Heart left ventricle (tissue), 16 donors: ENCODE measurements at regions of chr16 and their contacts with region 1.

Region 1: GRCh38 chr16:1492923-1493745 is at the start of gene TELO2:
- DNase-seq: peak; percentile 80 to 93 (median 85)
- ATAC-seq: peak; percentile 69 to 93 (median 90)
- H3K4me3 ChIP-seq: peak within 1 kb of the TSS; percentile 59 to 92 (median 76)
- H3K27ac ChIP-seq: peak within 1 kb of the TSS; percentile 75 to 98 (median 88)
- H3K4me1 ChIP-seq: peaks cover 0 to 31% (median 24%) of the 10 kb centered on the region in 12 donors
- H3K27me3 ChIP-seq: no peaks in the 10 kb centered on the region
- CTCF ChIP-seq: no peak
- POLR2A ChIP-seq: peak in 1 of 2 donors; percentile 20
- total RNA-seq, gene TELO2: 11.8 to 29.6 (median 16.7) TPM

Region 2: DNA sequence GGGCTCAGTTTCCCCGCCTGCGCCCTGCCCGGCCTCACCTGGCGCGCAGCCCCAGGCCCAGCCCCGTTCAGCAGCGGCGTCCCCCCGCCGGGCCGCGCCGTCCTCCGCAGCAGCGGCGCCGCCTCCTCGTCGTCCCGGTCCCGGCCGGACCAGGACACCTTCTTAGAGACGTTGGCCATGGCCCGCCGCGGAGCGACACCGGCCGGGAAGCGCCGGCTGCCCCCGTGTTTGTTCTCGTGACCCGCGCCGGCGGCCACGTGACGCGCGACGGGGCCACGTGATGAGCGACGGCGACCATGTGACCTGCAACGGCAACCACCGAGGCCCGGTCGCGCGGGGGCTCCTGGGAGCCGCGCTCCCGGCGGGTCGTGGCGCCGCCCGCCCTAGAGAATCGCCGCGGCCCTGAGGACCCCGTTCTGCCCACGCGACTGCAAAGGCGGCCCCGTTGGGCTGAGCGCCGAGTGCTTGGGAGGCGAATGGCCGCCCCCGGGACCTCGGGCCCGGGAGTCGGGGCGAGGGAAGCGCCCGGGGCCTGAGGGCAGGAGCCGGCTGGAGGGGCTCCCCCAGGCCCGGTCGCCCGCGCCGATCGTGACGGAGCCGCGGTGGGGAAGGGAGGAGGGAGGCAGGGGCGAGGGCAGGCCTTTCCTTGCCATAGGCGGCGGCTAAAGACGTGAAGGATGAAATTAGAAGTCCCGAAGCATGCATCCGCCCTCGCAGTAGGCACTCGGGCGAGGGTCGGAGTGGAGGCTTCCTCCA is 18.2 kb before region 1 on chr16 and contains the start of gene CLCN7:
- intact Hi-C with region 1: loop called in 1 of 10 experiments (anchors 2 kb)
- DNase-seq: peak; percentile 92 to 96 (median 93)
- ATAC-seq: peak; percentile 85 to 97 (median 96)
- H3K4me3 ChIP-seq: peak within 1 kb of the TSS; percentile 68 to 99 (median 87)
- H3K27ac ChIP-seq: peak within 1 kb of the TSS; percentile 79 to 98 (median 92)
- H3K4me1 ChIP-seq: peaks cover 0 to 51% (median 19%) of the 10 kb centered on the region in 12 donors
- H3K27me3 ChIP-seq: no peaks in the 10 kb centered on the region
- CTCF ChIP-seq: peak in 1 of 12 donors; percentile 20
- POLR2A ChIP-seq: peak in 1 of 2 donors; percentile 93
- total RNA-seq, gene CLCN7: 30.3 to 70.8 (median 33.6) TPM

Region 3: GRCh38 chr16:1533443-1533951 is 40.4 kb after region 1 on chr16 and contains the start of gene TMEM204:
- intact Hi-C with region 1: loop called in 3 of 10 experiments (anchors 5 kb)
- DNase-seq: peak; percentile 87 to 91 (median 90)
- ATAC-seq: peak; percentile 52 to 76 (median 62)
- H3K4me3 ChIP-seq: peak within 1 kb of the TSS; percentile 66 to 93 (median 87)
- H3K27ac ChIP-seq: peak within 1 kb of the TSS; percentile 92 to 99 (median 96)
- H3K4me1 ChIP-seq: peaks cover 8 to 83% (median 66%) of the 10 kb centered on the region in 12 donors
- H3K27me3 ChIP-seq: peaks cover 0 to 17% (median 0%) of the 10 kb centered on the region in 9 donors
- CTCF ChIP-seq: no peak
- POLR2A ChIP-seq: peak in 1 of 2 donors; percentile 93
- total RNA-seq, gene TMEM204: 14.0 to 64.2 (median 19.5) TPM

Region 4: GRCh38 chr16:1564325-1564724 is 71.2 kb after region 1 on chr16:
- intact Hi-C with region 1: loop called in 4 of 10 experiments (anchors 5 to 10 kb)
- DNase-seq: no peak
- ATAC-seq: no peak
- H3K4me3 ChIP-seq: no peak overlapping the region
- H3K27ac ChIP-seq: no peak overlapping the region
- H3K4me1 ChIP-seq: peaks cover 0 to 15% (median 0%) of the 10 kb centered on the region in 12 donors
- H3K27me3 ChIP-seq: no peaks in the 10 kb centered on the region
- CTCF ChIP-seq: peak in 11 of 12 donors; percentile 18 to 58 (median 39)
- POLR2A ChIP-seq: no peak

Region 5: GRCh38 chr16:1677802-1678496 is 184.8 kb after region 1 on chr16 and contains the start of gene JPT2:
- intact Hi-C with region 1: loop called in 1 of 10 experiments (anchors 10 kb)
- DNase-seq: peak; percentile 97 to 99 (median 98)
- ATAC-seq: peak; percentile 95 to 99 (median 98)
- H3K4me3 ChIP-seq: peak within 1 kb of the TSS; percentile 61 to 98 (median 77)
- H3K27ac ChIP-seq: peak within 1 kb of the TSS in 11 of 12 donors; percentile 17 to 81 (median 71)
- H3K4me1 ChIP-seq: peaks cover 0 to 16% (median 9%) of the 10 kb centered on the region in 12 donors
- H3K27me3 ChIP-seq: no peaks in the 10 kb centered on the region
- CTCF ChIP-seq: no peak
- POLR2A ChIP-seq: peak in 1 of 2 donors; percentile 66
- total RNA-seq, gene JPT2: 11.7 to 50.4 (median 34.1) TPM